ENCODE measurements at regions of chr12 and their contacts with region 1.

Region 1: DNA sequence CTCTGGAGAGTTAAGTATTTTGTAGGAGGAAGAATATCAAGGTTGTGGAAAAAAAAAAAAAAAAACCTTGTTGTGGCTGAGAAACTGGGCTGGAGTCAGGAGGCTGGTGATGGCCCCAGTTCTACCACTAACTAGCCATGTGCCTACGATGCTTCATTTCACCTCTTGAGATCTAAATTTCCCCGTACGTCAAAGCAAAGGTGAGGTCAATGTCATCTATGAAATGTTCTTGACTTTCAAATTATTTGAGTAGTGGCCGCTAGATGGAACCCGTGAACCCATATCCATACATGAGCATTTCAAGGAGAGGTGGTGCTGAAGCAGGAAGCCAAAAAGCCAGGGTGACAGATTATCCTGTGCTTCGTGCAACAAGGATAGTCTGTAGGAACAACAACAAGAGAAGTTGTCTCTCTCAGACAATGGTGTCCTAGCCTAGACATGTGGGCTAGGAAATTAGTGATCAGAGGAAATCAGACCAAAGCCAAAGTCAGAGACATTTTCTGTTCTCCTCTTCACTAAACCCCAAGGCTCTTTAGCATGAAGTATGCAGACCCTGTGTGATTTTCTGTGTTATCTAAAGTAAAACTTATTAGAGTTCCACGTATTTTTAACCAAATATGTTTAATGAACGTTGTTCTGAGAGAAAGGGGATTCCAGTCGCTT is 95.5 kb upstream of the ETV6 start:
- DNase-seq: peak; percentile 62
- H3K4me3 Mint-ChIP-seq: no peak overlapping the region
- H3K27ac Mint-ChIP-seq: peak overlapping the region; percentile 47
- H3K4me1 Mint-ChIP-seq: peaks cover 23% of the 10 kb centered on the region
- H3K27me3 Mint-ChIP-seq: peaks cover 4% of the 10 kb centered on the region

Region 2: DNA sequence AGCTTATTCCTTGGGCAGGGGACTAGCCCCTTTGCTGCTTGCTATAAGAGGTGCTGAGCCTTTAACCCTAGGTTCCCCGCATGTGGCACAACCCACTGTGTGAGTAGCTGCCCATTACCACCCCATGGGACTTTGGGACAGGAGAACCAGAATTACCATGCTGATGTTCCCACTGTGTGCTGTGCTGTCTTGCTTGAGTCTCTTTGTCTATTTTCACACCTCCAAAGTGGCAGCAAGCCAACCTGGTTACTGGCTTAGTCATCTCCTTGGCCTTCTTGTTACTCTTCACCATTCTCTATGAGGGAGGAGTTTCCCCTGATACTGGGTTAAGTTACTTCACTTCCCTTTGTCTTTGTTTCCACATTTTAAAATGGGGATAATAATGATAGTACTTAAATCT is 22.1 kb after region 1 on chr12:
- CTCF ChIA-PET with region 1: interaction called, 5 read pairs
- POLR2A ChIA-PET with region 1: no interaction called
- intact Hi-C with region 1: loop called (anchors 1 kb)
- DNase-seq: peak; percentile 73
- H3K4me3 Mint-ChIP-seq: no peak overlapping the region
- H3K27ac Mint-ChIP-seq: no peak overlapping the region
- H3K4me1 Mint-ChIP-seq: peaks cover 24% of the 10 kb centered on the region
- H3K27me3 Mint-ChIP-seq: no peaks in the 10 kb centered on the region

Region 3: GRCh38 chr12:11702959-11703358 is 149.0 kb after region 1 on chr12:
- CTCF ChIA-PET with region 1: no interaction called
- POLR2A ChIA-PET with region 1: no interaction called
- intact Hi-C with region 1: loop called (anchors 1 kb)
- DNase-seq: peak; percentile 49
- H3K4me3 Mint-ChIP-seq: peak overlapping the region; percentile 48
- H3K27ac Mint-ChIP-seq: peak overlapping the region; percentile 76
- H3K4me1 Mint-ChIP-seq: peaks cover 63% of the 10 kb centered on the region
- H3K27me3 Mint-ChIP-seq: no peaks in the 10 kb centered on the region